Gastrocnemius medialis (tissue), 4 donors: ENCODE measurements at regions of chr4 and their contacts with region 1.

Region 1: GRCh38 chr4:60133375-60133774 is 1066.8 kb upstream of the ADGRL3 start:
- DNase-seq: no peak
- ATAC-seq: no peak
- H3K4me3 ChIP-seq: no peak overlapping the region
- H3K27ac ChIP-seq: no peak overlapping the region
- H3K4me1 ChIP-seq: no peaks in the 10 kb centered on the region
- H3K27me3 ChIP-seq: no peaks in the 10 kb centered on the region
- CTCF ChIP-seq: no peak
- POLR2A ChIP-seq: no peak

Region 2: GRCh38 chr4:60296386-60296785 is 163.0 kb after region 1 on chr4:
- in situ Hi-C with region 1: loop called in 1 of 4 experiments (anchors 25 kb)
- intact Hi-C with region 1: no loop called
- DNase-seq: no peak
- ATAC-seq: no peak
- H3K4me3 ChIP-seq: no peak overlapping the region
- H3K27ac ChIP-seq: no peak overlapping the region
- H3K4me1 ChIP-seq: no peaks in the 10 kb centered on the region
- H3K27me3 ChIP-seq: no peaks in the 10 kb centered on the region
- CTCF ChIP-seq: no peak
- POLR2A ChIP-seq: no peak

Region 3: GRCh38 chr4:60396371-60397079 is 263.1 kb after region 1 on chr4:
- in situ Hi-C with region 1: no loop called
- intact Hi-C with region 1: no loop called
- DNase-seq: no peak
- ATAC-seq: no peak
- H3K4me3 ChIP-seq: no peak overlapping the region
- H3K27ac ChIP-seq: no peak overlapping the region
- H3K4me1 ChIP-seq: no peaks in the 10 kb centered on the region
- H3K27me3 ChIP-seq: no peaks in the 10 kb centered on the region
- CTCF ChIP-seq: no peak
- POLR2A ChIP-seq: no peak

Region 4: DNA sequence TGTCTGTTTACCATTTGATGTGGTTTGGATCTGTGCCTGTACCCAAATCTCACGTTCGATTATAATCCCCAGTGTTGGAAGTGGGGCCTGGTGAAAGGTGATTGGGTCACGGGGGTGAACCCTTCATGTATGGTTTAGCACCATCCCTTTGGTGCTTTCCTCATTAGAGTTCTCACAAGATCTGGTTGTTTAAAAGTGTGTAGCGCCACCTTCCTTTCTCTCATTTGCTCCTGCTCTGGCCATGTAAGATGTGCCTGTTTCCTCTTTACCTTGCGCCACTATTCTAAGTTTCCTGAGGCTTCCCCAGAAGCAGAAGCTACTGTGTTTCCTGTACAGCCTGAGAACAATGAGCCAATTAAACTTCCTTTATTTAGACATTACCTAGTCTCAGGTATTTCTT is 456.1 kb after region 1 on chr4:
- in situ Hi-C with region 1: no loop called
- intact Hi-C with region 1: no loop called
- DNase-seq: no peak
- ATAC-seq: no peak
- H3K4me3 ChIP-seq: no peak overlapping the region
- H3K27ac ChIP-seq: no peak overlapping the region
- H3K4me1 ChIP-seq: no peaks in the 10 kb centered on the region
- H3K27me3 ChIP-seq: no peaks in the 10 kb centered on the region
- CTCF ChIP-seq: no peak
- POLR2A ChIP-seq: no peak